MCF 10A (cell line): ENCODE measurements at regions of chr6 and their contacts with region 1.

Region 1: GRCh38 chr6:109626311-109626710 is 64.7 kb downstream of the AK9 start:
- DNase-seq: peak; percentile 6
- H3K4me3 Mint-ChIP-seq: no peak overlapping the region
- H3K27ac Mint-ChIP-seq: no peak overlapping the region
- H3K4me1 Mint-ChIP-seq: no peaks in the 10 kb centered on the region
- H3K27me3 Mint-ChIP-seq: no peaks in the 10 kb centered on the region
- CTCF ChIP-seq: no peak

Region 2: GRCh38 chr6:109561844-109562243 is 64.5 kb before region 1 on chr6:
- CTCF ChIA-PET with region 1: interaction called, 4 read pairs
- POLR2A ChIA-PET with region 1: no interaction called
- intact Hi-C with region 1: loop called (anchors 2 kb)
- DNase-seq: no peak
- H3K4me3 Mint-ChIP-seq: no peak overlapping the region
- H3K27ac Mint-ChIP-seq: no peak overlapping the region
- H3K4me1 Mint-ChIP-seq: no peaks in the 10 kb centered on the region
- H3K27me3 Mint-ChIP-seq: no peaks in the 10 kb centered on the region
- CTCF ChIP-seq: no peak

Region 3: GRCh38 chr6:109998159-109998785 is 372.0 kb after region 1 on chr6:
- CTCF ChIA-PET with region 1: no interaction called
- POLR2A ChIA-PET with region 1: no interaction called
- intact Hi-C with region 1: no loop called
- DNase-seq: no peak
- H3K4me3 Mint-ChIP-seq: no peak overlapping the region
- H3K27ac Mint-ChIP-seq: no peak overlapping the region
- H3K4me1 Mint-ChIP-seq: no peaks in the 10 kb centered on the region
- H3K27me3 Mint-ChIP-seq: peaks cover 25% of the 10 kb centered on the region
- CTCF ChIP-seq: no peak

Region 4: DNA sequence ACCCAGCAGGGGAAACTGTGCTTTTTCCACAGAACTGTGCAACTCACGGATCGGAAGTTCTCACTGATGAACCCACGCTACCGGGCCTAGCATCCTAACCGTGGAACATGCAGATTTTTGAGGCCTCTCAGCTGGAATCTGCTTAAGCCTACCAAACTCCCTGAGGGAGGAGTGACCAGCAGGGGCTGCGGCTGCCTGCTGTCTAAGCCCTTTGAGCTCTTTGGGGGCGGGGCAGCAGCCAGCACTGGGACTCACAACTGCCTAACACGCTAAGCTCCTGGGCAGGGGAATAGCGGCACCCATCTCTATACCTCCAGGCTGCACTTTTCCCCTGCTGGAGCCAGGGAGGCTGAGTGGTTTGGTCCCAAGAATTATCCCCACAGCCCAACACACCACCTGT is 752.2 kb after region 1 on chr6:
- CTCF ChIA-PET with region 1: no interaction called
- POLR2A ChIA-PET with region 1: no interaction called
- intact Hi-C with region 1: no loop called
- DNase-seq: no peak
- H3K4me3 Mint-ChIP-seq: no peak overlapping the region
- H3K27ac Mint-ChIP-seq: no peak overlapping the region
- H3K4me1 Mint-ChIP-seq: no peaks in the 10 kb centered on the region
- H3K27me3 Mint-ChIP-seq: peaks cover 32% of the 10 kb centered on the region
- CTCF ChIP-seq: no peak